Caco-2 (cell line): ENCODE measurements at regions of chr6 and their contacts with region 1.

Region 1: DNA sequence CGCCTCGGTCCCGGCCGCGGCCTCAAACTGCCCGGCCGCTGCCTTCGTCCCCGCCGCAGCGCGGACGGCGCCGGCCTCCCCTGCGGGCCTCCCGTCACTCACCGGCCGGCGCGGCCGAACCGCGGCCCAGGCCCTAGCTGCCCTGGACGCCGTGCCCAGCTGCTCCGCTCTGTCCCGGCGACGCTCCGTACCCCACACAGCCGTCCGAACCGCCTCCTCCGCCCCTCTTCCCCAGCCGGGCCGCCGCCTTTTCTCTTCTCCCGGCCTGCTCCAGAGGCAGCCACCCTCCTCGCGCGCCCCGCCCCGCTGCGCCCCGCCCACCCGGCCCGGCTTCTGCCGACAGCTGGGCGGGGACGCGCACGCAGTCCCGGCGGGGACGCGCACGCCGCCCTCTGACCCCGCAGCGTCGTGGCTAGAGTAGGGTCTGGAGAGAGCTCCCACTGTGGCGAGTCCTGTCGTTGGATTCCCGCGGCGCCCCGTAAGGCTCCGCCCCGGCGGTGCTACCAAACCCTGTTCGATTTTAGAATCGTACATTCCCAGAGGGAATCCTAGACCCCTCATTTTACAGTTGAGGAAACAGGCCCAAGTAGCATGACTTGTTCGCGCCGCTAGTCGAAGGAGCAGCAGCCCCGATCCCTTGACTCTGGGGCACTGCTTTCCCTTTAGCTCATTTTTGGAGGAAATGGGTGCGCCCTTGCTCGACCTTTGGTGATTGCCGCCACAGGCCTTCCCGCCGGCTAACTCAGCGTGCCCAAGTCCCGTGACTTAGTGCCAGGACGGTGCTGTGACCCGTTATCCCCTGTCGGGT is at the start of gene FBXO30:
- DNase-seq: peak; percentile 88 to 93
- H3K4me3 ChIP-seq: peak within 1 kb of the TSS; percentile 75
- H3K4me3 Mint-ChIP-seq: peak within 1 kb of the TSS; percentile 82
- H3K27ac Mint-ChIP-seq: peak within 1 kb of the TSS; percentile 69
- H3K4me1 ChIP-seq: peaks cover 16% of the 10 kb centered on the region
- H3K4me1 Mint-ChIP-seq: peaks cover 26% of the 10 kb centered on the region
- H3K27me3 ChIP-seq: no peaks in the 10 kb centered on the region
- H3K27me3 Mint-ChIP-seq: no peaks in the 10 kb centered on the region
- CTCF ChIP-seq: no peak
- total RNA-seq, gene FBXO30: 17.1 and 17.6 TPM in 2 replicates

Region 2: DNA sequence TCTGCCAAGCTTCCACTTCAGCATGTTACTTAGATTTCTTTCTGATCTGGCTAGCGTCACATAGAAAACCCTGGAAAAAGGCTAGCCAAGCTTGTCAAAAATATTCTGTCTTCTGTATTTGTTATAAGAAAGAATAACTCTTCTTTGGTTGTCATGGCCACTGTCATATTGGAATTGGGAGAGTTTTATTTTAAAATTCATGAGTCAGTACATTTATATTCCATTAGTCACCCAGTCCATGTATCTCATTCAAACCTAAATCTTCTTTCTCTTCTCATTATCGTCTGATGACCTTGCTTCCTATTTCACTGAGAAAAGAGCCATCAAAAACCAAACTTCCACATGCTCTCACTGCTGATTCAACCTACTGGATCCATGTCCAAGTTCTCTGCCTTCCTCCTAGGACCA is 145.1 kb before region 1 on chr6:
- CTCF ChIA-PET with region 1: no interaction called
- POLR2A ChIA-PET with region 1: no interaction called
- intact Hi-C with region 1: no loop called
- DNase-seq: no peak
- H3K4me3 ChIP-seq: no peak overlapping the region
- H3K4me3 Mint-ChIP-seq: no peak overlapping the region
- H3K27ac Mint-ChIP-seq: no peak overlapping the region
- H3K4me1 ChIP-seq: no peaks in the 10 kb centered on the region
- H3K4me1 Mint-ChIP-seq: no peaks in the 10 kb centered on the region
- H3K27me3 ChIP-seq: no peaks in the 10 kb centered on the region
- H3K27me3 Mint-ChIP-seq: no peaks in the 10 kb centered on the region
- CTCF ChIP-seq: no peak

Region 3: DNA sequence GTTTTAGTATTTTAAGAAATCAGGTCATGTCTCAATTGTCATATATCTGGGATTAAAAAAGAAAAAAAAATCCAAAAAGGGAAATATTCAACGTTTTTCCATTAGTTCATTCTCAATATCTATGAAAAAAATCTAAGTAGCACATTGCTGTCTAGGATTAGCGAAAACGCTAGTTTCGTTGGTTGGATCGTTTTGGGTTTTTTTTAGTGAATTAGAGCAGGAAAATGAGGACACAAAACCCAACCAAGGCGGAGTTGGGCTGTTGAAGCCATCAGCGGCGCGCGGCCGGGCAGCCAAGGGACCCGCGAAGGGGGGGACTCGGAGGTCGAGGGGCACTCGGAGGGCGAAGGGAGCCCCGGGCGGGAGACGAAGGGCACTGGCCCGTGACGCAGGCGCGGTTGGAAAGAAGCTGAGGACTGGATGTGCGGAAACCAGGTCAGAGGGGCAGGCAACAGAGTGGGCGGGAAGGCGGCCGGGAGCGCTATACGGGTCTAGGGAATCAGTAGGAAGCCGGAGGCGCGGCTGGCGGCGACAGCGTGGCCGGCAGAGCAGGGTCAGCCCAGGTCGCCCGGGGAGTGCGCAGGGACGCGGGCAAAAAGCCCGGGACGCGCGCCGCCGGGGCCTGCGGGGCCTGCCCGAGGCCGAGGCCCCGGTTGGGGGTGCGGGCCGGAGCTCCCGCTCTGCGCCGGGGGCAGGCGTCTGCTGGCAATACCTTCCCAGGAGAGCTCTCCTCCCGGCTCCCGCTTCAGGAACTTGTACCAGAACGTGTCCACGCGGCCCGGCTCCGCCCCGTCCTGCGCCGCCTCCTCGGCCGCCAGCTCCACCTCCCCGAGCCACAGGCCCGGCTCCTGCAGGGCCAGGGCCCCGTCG is 80.0 kb before region 1 on chr6:
- CTCF ChIA-PET with region 1: interaction called, 4 read pairs
- POLR2A ChIA-PET with region 1: interaction called, 17 read pairs
- intact Hi-C with region 1: loop called (anchors 1 kb)
- DNase-seq: peak; percentile 93
- H3K4me3 ChIP-seq: peak overlapping the region; percentile 79
- H3K4me3 Mint-ChIP-seq: peak overlapping the region; percentile 93
- H3K27ac Mint-ChIP-seq: peak overlapping the region; percentile 95
- H3K4me1 ChIP-seq: peaks cover 18% of the 10 kb centered on the region
- H3K4me1 Mint-ChIP-seq: peaks cover 10% of the 10 kb centered on the region
- H3K27me3 ChIP-seq: no peaks in the 10 kb centered on the region
- H3K27me3 Mint-ChIP-seq: no peaks in the 10 kb centered on the region
- CTCF ChIP-seq: no peak

Region 4: DNA sequence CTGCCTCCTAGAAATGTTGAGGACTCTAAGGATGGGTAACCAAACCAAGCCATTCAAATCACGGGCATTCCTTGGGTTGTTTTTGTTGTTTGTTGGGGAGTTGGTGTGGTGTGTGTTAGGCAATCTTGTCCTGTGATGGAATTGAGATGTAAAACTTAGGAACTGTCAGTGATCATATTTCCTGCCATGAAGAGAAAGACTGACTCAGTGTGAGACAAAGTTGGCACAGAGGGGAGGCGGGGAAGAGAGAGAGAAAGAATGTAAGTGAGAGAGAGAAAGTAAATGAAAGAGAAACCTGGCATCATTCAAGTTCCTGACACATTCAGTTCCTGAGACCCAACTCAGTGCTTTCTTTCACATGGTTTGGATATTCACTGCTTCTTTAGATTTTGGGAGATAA is 21.5 kb after region 1 on chr6:
- CTCF ChIA-PET with region 1: no interaction called
- POLR2A ChIA-PET with region 1: no interaction called
- intact Hi-C with region 1: no loop called
- DNase-seq: no peak
- H3K4me3 ChIP-seq: no peak overlapping the region
- H3K4me3 Mint-ChIP-seq: no peak overlapping the region
- H3K27ac Mint-ChIP-seq: no peak overlapping the region
- H3K4me1 ChIP-seq: no peaks in the 10 kb centered on the region; the same call in 1 of the 2 replicates
- H3K4me1 Mint-ChIP-seq: peaks cover 7% of the 10 kb centered on the region
- H3K27me3 ChIP-seq: no peaks in the 10 kb centered on the region
- H3K27me3 Mint-ChIP-seq: no peaks in the 10 kb centered on the region
- CTCF ChIP-seq: no peak

Region 5: DNA sequence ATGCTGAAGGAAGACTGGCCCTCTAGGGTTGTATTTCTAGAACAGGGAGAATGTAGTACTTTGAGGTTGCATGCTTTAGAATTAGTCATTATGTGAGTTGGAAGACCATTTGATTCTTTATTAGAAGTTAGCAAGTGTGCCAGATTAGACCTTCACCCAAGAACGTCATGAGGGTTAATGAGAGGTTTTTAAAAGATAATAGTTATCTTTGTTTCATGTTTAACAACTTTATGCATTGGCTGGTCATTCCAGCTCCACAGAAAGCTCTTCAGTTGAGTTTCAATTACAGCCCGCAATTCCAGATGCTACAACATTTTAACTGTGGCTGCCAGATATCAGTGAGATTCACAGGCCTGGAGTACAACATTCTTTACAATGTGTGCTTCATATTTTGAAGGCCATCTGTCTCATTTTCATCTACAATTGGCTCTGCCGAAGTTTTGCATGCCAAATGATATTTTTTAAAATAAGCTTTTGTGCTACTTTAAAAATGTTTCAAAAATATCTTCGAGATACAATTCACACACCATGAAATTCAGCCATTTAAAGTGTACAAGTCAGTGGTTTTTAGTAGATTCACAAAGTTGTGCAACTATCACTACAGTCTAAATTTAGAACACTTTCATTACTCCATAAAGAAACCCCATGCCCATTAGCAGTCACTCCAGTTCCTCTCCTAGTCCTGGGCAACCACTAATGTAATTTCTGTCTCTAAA is 60.9 kb after region 1 on chr6:
- CTCF ChIA-PET with region 1: no interaction called
- POLR2A ChIA-PET with region 1: interaction called, 16 read pairs
- intact Hi-C with region 1: loop called (anchors 1 kb)
- DNase-seq: no peak
- H3K4me3 ChIP-seq: no peak overlapping the region
- H3K4me3 Mint-ChIP-seq: no peak overlapping the region
- H3K27ac Mint-ChIP-seq: no peak overlapping the region
- H3K4me1 ChIP-seq: peaks cover 38% of the 10 kb centered on the region
- H3K4me1 Mint-ChIP-seq: peaks cover 16% of the 10 kb centered on the region
- H3K27me3 ChIP-seq: no peaks in the 10 kb centered on the region
- H3K27me3 Mint-ChIP-seq: no peaks in the 10 kb centered on the region
- CTCF ChIP-seq: no peak

Region 6: DNA sequence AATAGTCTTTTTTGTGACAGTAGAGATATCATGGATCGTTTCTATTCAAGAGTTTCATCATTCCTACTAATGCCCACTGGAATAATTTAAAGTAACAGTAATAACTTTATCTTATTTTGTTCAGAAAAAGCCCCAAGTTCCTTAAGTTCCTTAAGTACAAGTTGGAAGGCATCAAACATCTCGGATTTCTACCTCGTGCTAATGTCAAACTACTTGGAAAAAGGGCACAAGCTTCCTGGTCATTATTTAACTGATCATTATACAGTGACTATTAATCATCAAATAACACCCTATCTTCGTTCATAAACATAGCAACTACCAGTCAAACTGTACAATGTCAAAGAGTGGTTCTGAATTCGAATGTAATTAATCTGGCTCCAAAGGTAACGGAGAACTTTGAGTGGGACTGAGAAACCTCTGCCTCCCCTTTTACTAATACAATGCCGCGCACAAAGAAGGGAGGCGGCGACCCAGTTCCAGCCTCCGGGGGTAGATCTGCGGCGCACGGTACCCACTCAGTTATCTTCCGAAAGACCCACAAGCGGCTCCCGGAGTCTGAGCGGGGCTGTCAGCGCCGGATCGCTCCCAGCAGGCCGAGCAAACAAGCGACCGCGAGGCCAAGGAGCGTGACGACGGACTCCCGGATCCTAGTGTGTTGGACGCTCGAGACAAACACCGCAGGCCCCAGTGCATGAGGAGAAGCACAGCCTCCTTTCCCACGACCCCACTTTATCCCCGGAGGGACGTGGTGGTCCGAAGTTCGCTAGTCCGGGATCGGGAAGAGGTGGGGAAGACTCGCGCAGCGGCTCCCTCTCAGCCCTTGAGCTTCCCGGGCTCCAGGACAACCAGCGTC is 148.7 kb after region 1 on chr6:
- CTCF ChIA-PET with region 1: no interaction called
- POLR2A ChIA-PET with region 1: interaction called, 5 read pairs
- intact Hi-C with region 1: loop called (anchors 2 kb)
- DNase-seq: peak in 1 of 2 experiments; percentile 59
- H3K4me3 ChIP-seq: peak overlapping the region; percentile 59
- H3K4me3 Mint-ChIP-seq: peak overlapping the region; percentile 95
- H3K27ac Mint-ChIP-seq: peak overlapping the region; percentile 92
- H3K4me1 ChIP-seq: peaks cover 22% of the 10 kb centered on the region
- H3K4me1 Mint-ChIP-seq: peaks cover 13% of the 10 kb centered on the region
- H3K27me3 ChIP-seq: no peaks in the 10 kb centered on the region
- H3K27me3 Mint-ChIP-seq: no peaks in the 10 kb centered on the region
- CTCF ChIP-seq: no peak

Region 7: DNA sequence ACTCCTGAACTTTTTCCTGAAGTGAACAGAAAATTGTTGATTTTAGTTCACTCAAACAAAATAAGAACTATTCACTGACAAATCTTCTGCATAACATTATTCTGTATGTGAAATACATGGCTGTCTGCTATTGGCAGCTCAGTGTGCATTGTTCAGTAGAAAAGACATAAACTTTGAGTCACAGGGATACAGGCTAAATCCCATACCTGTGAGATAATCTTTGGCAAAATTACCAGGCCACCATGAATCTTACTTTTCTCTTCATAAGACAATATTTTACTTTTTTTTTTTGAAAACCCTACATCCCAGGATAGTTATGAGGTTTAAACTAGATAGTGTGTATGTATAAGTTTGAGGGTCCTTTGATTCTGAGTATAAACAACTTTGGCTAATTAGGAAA is 439.0 kb after region 1 on chr6:
- CTCF ChIA-PET with region 1: no interaction called
- POLR2A ChIA-PET with region 1: no interaction called
- intact Hi-C with region 1: no loop called
- DNase-seq: no peak
- H3K4me3 ChIP-seq: no peak overlapping the region
- H3K4me3 Mint-ChIP-seq: no peak overlapping the region
- H3K27ac Mint-ChIP-seq: no peak overlapping the region
- H3K4me1 ChIP-seq: no peaks in the 10 kb centered on the region
- H3K4me1 Mint-ChIP-seq: no peaks in the 10 kb centered on the region
- H3K27me3 ChIP-seq: no peaks in the 10 kb centered on the region
- H3K27me3 Mint-ChIP-seq: peaks cover 9% of the 10 kb centered on the region
- CTCF ChIP-seq: no peak